Kidney (tissue), 22 donors: ENCODE measurements at regions of chr15 and their contacts with region 1.

Region 1: DNA sequence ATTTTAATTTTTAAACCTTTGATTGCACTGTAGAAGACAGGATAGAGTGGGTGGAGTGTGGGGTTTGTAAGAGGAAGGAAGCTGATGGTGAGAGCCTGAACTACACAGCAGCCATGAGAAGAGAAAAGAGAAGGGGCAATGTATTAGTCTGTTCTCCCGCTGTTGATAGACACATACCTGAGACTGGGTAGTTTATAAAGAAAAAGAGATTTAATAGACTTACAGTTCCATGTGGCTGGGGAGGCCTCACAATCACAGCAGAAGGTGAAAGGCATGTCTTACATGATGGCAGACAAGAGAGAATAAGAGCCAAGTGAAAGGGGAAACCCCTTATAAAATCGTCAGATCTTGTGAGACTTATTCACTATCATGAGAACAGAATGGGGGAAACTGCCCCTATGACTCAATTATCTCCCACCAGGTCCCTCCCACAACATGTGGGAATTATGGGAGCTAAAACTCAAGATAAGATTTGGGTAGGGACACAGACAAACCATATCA is 37.3 kb downstream of the STARD5 start:
- DNase-seq: no peak
- H3K4me3 ChIP-seq: no peak overlapping the region
- H3K27ac ChIP-seq: no peak overlapping the region
- H3K4me1 ChIP-seq: peaks cover 0 to 2% (median 0%) of the 10 kb centered on the region in 3 donors
- H3K27me3 ChIP-seq: no peaks in the 10 kb centered on the region
- CTCF ChIP-seq: no peak

Region 2: DNA sequence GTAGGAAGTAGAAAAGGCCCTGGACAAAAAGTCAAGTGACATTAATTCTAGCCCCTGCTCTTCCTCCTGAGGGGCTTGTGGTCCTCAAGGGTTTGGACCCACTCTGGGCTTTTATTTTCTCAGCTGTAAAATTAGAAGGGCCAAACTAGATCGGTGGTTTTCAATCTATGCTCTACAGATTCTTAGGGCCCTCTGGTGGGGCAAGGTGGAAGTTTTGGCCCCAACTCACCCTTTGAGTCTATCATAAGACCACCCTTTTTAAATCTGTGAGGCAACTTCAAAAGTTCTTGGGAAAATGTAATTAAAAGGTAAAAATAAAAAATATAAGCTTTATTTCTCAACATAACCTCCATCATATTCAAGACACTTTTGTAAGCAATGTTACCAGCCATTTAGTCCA is 178.2 kb before region 1 on chr15:
- intact Hi-C with region 1: no loop called
- DNase-seq: no peak
- H3K4me3 ChIP-seq: no peak overlapping the region
- H3K27ac ChIP-seq: no peak overlapping the region
- H3K4me1 ChIP-seq: no peaks in the 10 kb centered on the region
- H3K27me3 ChIP-seq: no peaks in the 10 kb centered on the region
- CTCF ChIP-seq: peak; percentile 24

Region 3: GRCh38 chr15:81336568-81336967 is 49.9 kb after region 1 on chr15:
- intact Hi-C with region 1: loop called (anchors 10 kb)
- DNase-seq: no peak
- H3K4me3 ChIP-seq: no peak overlapping the region
- H3K27ac ChIP-seq: no peak overlapping the region
- H3K4me1 ChIP-seq: no peaks in the 10 kb centered on the region
- H3K27me3 ChIP-seq: no peaks in the 10 kb centered on the region
- CTCF ChIP-seq: peak; percentile 3